Activated T-helper 1 cell treated with anti-CD3 and anti-CD28 coated beads, Interleukin-12 subunit alpha, Interleukin-12 subunit beta, Interleukin-2, Interleukin-4 antibody, amounts not matched to agents 30 ng/mL and 10 ng/mL and 1 ng/mL, durations not matched to agents 14 hours and 24 hours and 36 hours (primary cell): ENCODE measurements at regions of chr6 and their contacts with region 1.

Region 1: DNA sequence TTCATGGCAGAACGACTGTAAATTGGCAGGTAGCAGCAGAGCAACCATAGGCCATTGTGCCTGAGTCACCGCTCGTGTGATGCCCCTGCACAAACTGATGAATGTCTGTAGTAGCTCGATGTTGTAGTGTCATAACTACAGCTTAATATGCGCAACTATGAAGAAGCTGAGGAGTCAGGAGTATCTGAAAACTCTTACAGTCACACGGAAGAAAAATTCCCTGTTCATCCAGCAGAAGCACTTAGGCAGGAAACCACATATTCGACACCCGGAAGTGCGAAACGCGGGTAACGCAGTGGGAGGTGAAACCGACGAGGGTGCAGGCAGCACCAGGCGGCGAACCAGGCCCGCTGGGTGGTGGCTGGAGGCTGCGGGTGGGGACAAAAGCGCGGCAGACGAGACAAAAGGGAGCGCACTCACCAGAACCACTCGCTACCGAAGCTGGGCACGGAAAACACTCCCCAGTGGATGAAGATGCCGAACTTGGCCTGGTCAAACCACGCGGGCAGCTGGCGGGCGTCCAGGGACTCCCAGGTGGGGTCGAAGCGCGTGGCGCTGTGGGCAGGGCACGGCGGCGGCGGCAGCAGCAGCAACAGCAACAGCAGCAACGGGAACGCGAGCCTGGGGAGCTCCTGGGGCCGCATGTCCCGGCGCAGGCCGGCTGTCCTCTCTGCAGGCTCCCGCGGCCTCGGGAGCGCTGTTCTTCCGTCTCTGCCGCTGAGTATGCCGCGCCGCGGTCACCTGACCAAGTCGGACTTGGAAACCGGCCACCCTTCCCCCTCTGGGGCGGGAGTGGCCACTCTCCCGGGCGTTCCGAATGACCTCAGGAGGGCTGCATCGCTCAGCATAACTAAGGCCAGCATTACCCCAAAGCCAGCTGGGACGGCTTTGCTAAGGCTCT is at the start of gene FUCA2:
- DNase-seq: peak; percentile 64
- H3K4me3 Mint-ChIP-seq: peak within 1 kb of the TSS; percentile 95
- H3K27ac Mint-ChIP-seq: peak within 1 kb of the TSS; percentile 96
- H3K4me1 Mint-ChIP-seq: peaks cover 39% of the 10 kb centered on the region
- H3K27me3 Mint-ChIP-seq: no peaks in the 10 kb centered on the region
- total RNA-seq, gene FUCA2: 15.7 and 16.3 TPM in 2 replicates

Region 2: GRCh38 chr6:143361536-143362191 is 149.6 kb before region 1 on chr6:
- intact Hi-C with region 1: no loop called
- DNase-seq: no peak
- H3K4me3 Mint-ChIP-seq: no peak overlapping the region
- H3K27ac Mint-ChIP-seq: no peak overlapping the region
- H3K4me1 Mint-ChIP-seq: no peaks in the 10 kb centered on the region
- H3K27me3 Mint-ChIP-seq: no peaks in the 10 kb centered on the region

Region 3: GRCh38 chr6:143450453-143451371 is 60.5 kb before region 1 on chr6 and contains the starts of genes ADAT2 and PEX3:
- intact Hi-C with region 1: loop called (anchors 1 kb)
- DNase-seq: peak; percentile 92
- H3K4me3 Mint-ChIP-seq: peak within 1 kb of the TSS; percentile 98
- H3K27ac Mint-ChIP-seq: peak within 1 kb of the TSS; percentile 99
- H3K4me1 Mint-ChIP-seq: peaks cover 50% of the 10 kb centered on the region
- H3K27me3 Mint-ChIP-seq: no peaks in the 10 kb centered on the region
- total RNA-seq, gene ADAT2: 39.0 and 43.6 TPM in 2 replicates
- total RNA-seq, gene PEX3: 23.6 and 25.0 TPM in 2 replicates

Region 4: DNA sequence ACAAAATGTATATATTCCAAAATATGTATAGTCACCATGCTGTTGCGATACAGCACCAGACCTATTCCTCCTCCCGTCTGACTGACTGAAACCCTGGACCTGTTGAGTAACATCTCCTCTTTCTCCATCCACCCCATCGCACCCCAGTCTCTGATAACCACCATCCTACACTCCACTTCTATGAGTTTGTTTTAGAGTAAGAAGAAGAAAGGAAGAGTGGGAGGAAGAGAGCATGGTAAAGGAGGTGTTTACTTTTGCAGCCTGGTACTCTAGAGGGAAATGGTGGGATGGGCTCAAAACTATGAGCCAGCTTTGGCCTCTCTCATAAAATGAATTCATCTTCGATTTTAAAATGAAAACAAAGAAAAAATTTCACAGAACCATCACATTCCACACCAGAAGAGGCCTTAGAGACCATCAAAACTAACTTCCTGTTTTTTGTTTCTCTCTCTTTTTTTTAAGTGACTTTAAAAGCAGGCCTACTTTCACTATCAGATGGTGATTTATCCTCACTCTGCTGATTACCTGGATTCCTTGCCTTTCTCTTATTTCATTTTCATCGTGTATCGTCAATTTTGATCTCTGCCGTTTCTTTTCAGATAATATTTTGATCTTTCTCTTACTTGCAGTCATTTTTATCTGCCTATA is 17.0 kb after region 1 on chr6:
- intact Hi-C with region 1: loop called (anchors 1 kb)
- DNase-seq: no peak
- H3K4me3 Mint-ChIP-seq: peak overlapping the region; percentile 51
- H3K27ac Mint-ChIP-seq: peak overlapping the region; percentile 80
- H3K4me1 Mint-ChIP-seq: peaks cover 15% of the 10 kb centered on the region
- H3K27me3 Mint-ChIP-seq: no peaks in the 10 kb centered on the region

Region 5: GRCh38 chr6:143536865-143537691 is 25.8 kb after region 1 on chr6:
- intact Hi-C with region 1: loop called (anchors 1 kb)
- DNase-seq: peak; percentile 50
- H3K4me3 Mint-ChIP-seq: peak overlapping the region; percentile 88
- H3K27ac Mint-ChIP-seq: peak overlapping the region; percentile 76
- H3K4me1 Mint-ChIP-seq: peaks cover 32% of the 10 kb centered on the region
- H3K27me3 Mint-ChIP-seq: no peaks in the 10 kb centered on the region

Region 6: DNA sequence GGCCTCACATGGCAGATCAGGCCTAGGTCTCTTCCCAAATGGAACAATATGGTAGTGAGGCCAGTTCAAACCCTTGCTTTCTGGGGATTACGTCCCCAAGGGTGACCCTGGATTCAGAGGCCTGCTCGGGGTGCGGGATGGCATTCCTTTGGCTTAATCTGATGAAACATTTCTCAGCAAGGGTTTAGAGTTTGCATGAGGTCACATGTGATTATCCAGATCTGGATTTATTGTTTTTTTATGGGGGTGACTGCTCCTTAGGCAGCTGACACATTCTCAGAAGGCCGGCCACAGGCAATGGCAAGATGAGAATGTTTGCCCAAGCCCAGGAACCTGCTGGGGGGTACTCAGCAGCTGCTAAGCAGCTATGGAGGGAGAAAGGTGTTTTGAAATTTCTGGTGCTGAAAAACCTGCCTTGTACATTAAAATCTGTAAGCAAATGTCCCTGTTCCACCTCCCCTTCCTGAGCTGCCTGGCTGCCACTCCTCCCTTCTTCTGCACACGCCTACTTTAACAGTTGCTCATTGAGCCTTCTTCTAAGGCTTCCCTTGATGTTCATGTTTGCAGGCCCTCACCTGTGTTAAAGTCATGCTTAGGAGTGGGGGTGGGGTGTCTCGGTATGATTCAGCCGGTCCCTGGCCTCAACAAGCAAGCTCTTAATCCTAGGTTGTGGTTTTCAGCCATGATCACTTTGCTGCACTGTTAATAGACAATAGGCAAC is 38.1 kb after region 1 on chr6:
- intact Hi-C with region 1: loop called (anchors 2 kb)
- DNase-seq: no peak
- H3K4me3 Mint-ChIP-seq: peak overlapping the region; percentile 40
- H3K27ac Mint-ChIP-seq: peak overlapping the region; percentile 74
- H3K4me1 Mint-ChIP-seq: peaks cover 88% of the 10 kb centered on the region
- H3K27me3 Mint-ChIP-seq: no peaks in the 10 kb centered on the region

Region 7: GRCh38 chr6:143555071-143555492 is 43.8 kb after region 1 on chr6:
- intact Hi-C with region 1: loop called (anchors 2 kb)
- DNase-seq: no peak
- H3K4me3 Mint-ChIP-seq: peak overlapping the region; percentile 63
- H3K27ac Mint-ChIP-seq: peak overlapping the region; percentile 76
- H3K4me1 Mint-ChIP-seq: peaks cover 85% of the 10 kb centered on the region
- H3K27me3 Mint-ChIP-seq: no peaks in the 10 kb centered on the region

Region 8: GRCh38 chr6:144013486-144013909 is 502.3 kb after region 1 on chr6:
- intact Hi-C with region 1: loop called (anchors 1 kb)
- DNase-seq: peak; percentile 24
- H3K4me3 Mint-ChIP-seq: no peak overlapping the region
- H3K27ac Mint-ChIP-seq: no peak overlapping the region
- H3K4me1 Mint-ChIP-seq: no peaks in the 10 kb centered on the region
- H3K27me3 Mint-ChIP-seq: peaks cover 25% of the 10 kb centered on the region